ENCODE measurements at regions of chr1 and their contacts with region 1.

Region 1: DNA sequence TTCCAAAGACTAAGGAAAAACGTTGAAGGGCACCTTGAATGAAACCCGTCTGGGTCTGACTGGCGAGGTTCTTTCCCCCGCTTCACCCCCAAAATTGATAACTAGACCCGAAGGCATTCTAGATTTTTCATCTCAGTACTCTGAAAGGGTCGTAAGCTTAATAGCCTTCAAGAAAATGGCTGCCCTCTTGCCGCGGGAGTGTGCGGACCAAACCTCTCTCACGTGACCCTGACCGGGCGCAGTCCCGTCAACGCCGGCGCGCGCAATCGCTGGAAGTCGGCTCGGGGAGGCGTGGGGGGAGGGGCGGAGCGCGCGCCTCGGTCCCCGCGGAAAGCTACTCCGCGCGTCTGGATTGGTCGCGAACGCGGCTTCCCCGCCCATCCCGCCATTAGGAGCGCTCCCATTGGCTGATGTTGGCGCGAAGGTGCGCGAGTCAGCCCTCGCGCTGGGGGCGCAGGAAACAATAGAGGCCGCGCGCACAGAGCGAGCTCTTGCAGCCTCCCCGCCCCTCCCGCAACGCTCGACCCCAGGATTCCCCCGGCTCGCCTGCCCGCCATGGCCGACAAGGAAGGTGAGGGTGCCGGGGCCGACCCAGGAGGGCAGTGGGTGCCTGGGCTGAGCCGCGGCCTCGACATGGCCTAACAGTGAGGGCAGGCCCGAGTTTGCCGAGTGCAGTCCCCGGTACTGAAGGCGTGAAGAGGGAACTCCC is at the start of gene RBBP4:
- DNase-seq: peak; percentile 95 to 99 (median 98)
- ATAC-seq: peak; percentile 91
- H3K4me3 ChIP-seq: peak within 1 kb of the TSS; percentile 87
- H3K4me3 Mint-ChIP-seq: peak within 1 kb of the TSS; percentile 91 to 99 (median 94)
- H3K27ac ChIP-seq: peak within 1 kb of the TSS; percentile 86
- H3K27ac Mint-ChIP-seq: peak within 1 kb of the TSS; percentile 97 to 100 (median 99)
- H3K4me1 ChIP-seq: peaks cover 42 to 45% of the 10 kb centered on the region in 2 donors
- H3K4me1 Mint-ChIP-seq: peaks cover 28 to 73% (median 60%) of the 10 kb centered on the region in 7 donors
- H3K27me3 ChIP-seq: no peaks in the 10 kb centered on the region
- H3K27me3 Mint-ChIP-seq: peaks cover 0 to 2% (median 0%) of the 10 kb centered on the region in 5 donors
- total RNA-seq, gene RBBP4: 130 to 280 (median 162) TPM

Region 2: DNA sequence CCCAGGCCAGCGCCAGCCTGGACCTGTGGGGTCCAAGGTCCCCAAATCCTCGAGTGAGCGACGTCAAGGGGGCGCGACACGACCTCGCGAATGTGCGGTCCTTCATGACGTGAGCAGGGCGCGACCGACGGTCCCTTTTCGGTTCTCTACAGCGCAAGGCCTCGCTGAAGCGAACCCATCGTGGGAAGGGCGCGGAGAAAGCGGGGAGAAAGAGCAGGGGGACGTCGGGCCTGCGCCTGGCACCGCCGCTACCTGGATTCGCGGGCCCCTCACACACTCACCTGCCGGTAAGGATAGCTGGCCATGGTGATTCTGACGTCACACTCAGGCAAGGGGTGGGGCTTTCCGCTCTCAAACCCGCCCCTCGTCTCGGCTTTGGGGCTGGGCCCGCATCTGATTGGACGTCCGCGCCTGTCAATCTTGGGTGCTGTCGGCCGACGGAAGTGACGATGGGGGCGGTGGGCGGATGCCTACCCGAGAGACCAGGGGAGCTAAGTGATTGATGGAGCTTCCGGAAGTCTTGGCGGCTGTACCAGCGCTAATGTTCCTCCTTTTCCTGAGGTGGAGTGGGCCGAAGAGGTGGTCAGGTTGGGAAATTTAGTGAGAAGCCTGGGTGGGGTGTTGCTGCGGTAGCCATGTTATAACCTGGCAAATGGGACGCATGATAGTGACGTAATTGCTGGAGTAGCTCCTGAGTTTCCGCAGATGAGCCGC is 1006.2 kb before region 1 on chr1 and contains the start of gene PEF1:
- CTCF ChIA-PET with region 1: no interaction called
- POLR2A ChIA-PET with region 1: no interaction called
- intact Hi-C with region 1: loop called (anchors 2 kb)
- DNase-seq: peak; percentile 97 to 100 (median 99)
- ATAC-seq: peak; percentile 94
- H3K4me3 ChIP-seq: peak within 1 kb of the TSS; percentile 91
- H3K4me3 Mint-ChIP-seq: peak within 1 kb of the TSS; percentile 92 to 100 (median 98)
- H3K27ac ChIP-seq: peak within 1 kb of the TSS; percentile 98
- H3K27ac Mint-ChIP-seq: peak within 1 kb of the TSS; percentile 98 to 100 (median 99)
- H3K4me1 ChIP-seq: peaks cover 27 to 30% of the 10 kb centered on the region in 2 donors
- H3K4me1 Mint-ChIP-seq: peaks cover 18 to 47% (median 40%) of the 10 kb centered on the region in 7 donors
- H3K27me3 ChIP-seq: no peaks in the 10 kb centered on the region
- H3K27me3 Mint-ChIP-seq: no peaks in the 10 kb centered on the region
- total RNA-seq, gene PEF1: 37.7 to 49.8 (median 40.8) TPM

Region 3: GRCh38 chr1:32247983-32248889 is 402.7 kb before region 1 on chr1:
- CTCF ChIA-PET with region 1: no interaction called
- POLR2A ChIA-PET with region 1: no interaction called
- intact Hi-C with region 1: loop called in 1 of 2 experiments (anchors 2 kb)
- DNase-seq: peak; percentile 43 to 84 (median 56)
- ATAC-seq: peak; percentile 45
- H3K4me3 ChIP-seq: peak overlapping the region; percentile 52
- H3K4me3 Mint-ChIP-seq: peak overlapping the region; percentile 66 to 100 (median 98)
- H3K27ac ChIP-seq: peak overlapping the region; percentile 91
- H3K27ac Mint-ChIP-seq: peak overlapping the region; percentile 92 to 100 (median 99)
- H3K4me1 ChIP-seq: peaks cover 37 to 51% of the 10 kb centered on the region in 2 donors
- H3K4me1 Mint-ChIP-seq: peaks cover 32 to 60% (median 52%) of the 10 kb centered on the region in 7 donors
- H3K27me3 ChIP-seq: no peaks in the 10 kb centered on the region
- H3K27me3 Mint-ChIP-seq: peaks cover 0 to 2% (median 0%) of the 10 kb centered on the region in 5 donors

Region 4: DNA sequence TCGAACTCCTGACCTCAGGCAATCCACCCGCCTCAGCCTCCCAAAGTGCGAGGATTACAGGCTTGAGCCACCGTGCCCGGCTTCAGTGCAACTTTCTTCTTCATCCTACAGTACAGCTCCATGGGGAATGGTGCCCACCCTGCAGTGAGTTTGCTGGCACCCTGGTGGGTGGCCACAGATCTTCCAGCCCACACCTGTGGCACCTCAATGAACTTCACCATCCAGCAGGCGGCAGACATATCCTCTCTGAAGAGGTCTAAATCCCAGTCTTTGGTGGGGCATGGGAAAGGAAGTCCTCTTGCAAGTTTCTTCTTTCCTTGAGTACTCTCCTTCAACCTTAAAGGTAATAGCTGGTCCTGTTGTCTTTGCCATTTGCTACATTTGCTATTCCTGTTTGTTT is 129.7 kb before region 1 on chr1:
- CTCF ChIA-PET with region 1: no interaction called
- POLR2A ChIA-PET with region 1: no interaction called
- intact Hi-C with region 1: loop called (anchors 1 kb)
- DNase-seq: no peak
- ATAC-seq: no peak
- H3K4me3 ChIP-seq: no peak overlapping the region
- H3K4me3 Mint-ChIP-seq: peak overlapping the region in 9 of 10 donors; percentile 48 to 83 (median 66)
- H3K27ac ChIP-seq: no peak overlapping the region
- H3K27ac Mint-ChIP-seq: no peak overlapping the region
- H3K4me1 ChIP-seq: no peaks in the 10 kb centered on the region
- H3K4me1 Mint-ChIP-seq: peaks cover 0 to 14% (median 5%) of the 10 kb centered on the region in 7 donors
- H3K27me3 ChIP-seq: no peaks in the 10 kb centered on the region
- H3K27me3 Mint-ChIP-seq: peaks cover 5 to 19% (median 8%) of the 10 kb centered on the region in 5 donors

Region 5: DNA sequence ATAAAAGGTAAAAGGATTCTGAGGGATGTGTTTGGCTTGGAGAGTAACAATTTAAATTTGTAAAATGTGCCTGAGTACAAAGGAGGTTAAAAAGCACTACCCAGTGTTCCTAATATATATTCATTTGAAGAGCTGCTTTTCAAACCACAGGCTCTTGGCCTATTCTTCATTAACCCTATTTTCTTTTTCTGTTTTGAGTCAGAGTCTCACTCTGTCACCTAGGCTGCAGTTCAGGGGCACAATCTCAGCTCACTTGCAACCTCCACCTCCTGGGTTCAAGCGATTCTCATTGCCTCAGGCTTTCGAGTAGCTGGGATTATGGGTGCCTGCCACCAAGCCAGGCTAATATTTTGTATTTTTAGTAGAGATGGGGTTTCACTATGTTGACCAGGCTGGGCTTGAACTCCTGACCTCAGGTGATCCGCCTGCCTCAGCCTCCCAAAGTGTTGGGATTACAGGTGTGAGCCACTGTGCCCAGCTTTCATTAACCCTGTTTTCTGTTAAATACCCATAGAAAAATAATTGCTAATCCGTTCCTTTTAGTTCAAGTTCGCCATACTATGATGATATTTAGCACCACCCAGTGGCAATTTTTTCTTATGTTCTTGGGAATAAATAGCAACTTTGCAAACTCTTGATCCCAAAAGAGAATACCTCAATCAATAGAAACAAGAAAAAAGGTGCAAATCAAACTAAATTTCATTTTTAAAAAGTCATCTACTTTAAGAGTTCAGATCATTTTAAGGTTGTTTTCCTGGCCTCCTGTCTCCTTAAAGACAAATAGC is 31.0 kb before region 1 on chr1:
- CTCF ChIA-PET with region 1: no interaction called
- POLR2A ChIA-PET with region 1: no interaction called
- intact Hi-C with region 1: no loop called
- DNase-seq: no peak
- ATAC-seq: no peak
- H3K4me3 ChIP-seq: no peak overlapping the region
- H3K4me3 Mint-ChIP-seq: no peak overlapping the region
- H3K27ac ChIP-seq: no peak overlapping the region
- H3K27ac Mint-ChIP-seq: peak overlapping the region in 1 of 9 donors; percentile 19
- H3K4me1 ChIP-seq: peaks cover 0 to 13% of the 10 kb centered on the region in 2 donors
- H3K4me1 Mint-ChIP-seq: peaks cover 13 to 19% (median 18%) of the 10 kb centered on the region in 7 donors
- H3K27me3 ChIP-seq: no peaks in the 10 kb centered on the region
- H3K27me3 Mint-ChIP-seq: no peaks in the 10 kb centered on the region

Region 6: DNA sequence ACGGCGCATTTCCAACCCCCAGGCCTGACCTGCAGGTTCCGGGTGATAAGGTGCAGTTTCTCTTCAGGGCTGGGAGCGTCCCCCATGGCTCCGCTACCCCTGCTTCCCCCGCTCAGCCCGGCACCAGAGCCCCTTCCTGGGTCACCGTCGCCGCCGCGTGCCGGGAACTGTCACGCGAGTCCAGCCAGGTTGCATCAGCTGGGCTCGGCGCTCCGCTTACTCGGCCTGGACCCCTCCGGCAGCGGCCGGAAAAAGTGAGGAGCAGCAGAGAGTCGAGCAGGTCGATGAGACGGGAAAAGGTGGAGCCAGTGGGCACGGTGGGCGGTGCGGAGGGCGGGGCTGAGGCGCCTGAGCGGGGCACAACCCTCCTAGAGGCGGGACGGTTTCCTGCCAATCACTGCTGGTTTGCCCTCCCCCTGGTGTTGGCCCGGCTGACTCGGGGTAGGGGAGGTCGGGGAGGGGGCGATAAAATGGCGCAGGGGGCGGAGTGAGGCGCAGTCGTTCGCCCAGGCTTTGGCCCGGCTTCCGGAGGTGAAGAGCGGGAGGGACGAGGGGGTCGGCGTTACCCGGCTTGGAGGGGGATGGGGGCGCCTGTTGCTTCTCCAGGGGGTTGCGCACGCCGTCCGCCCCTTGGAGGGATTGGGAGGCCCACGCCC is 166.4 kb after region 1 on chr1 and contains the starts of genes S100PBP and YARS1:
- CTCF ChIA-PET with region 1: no interaction called
- POLR2A ChIA-PET with region 1: interaction called, 4 read pairs
- intact Hi-C with region 1: loop called (anchors 1 kb)
- DNase-seq: peak; percentile 98 to 100 (median 99)
- ATAC-seq: peak; percentile 99
- H3K4me3 ChIP-seq: peak within 1 kb of the TSS; percentile 86
- H3K4me3 Mint-ChIP-seq: peak within 1 kb of the TSS; percentile 85 to 99 (median 96)
- H3K27ac ChIP-seq: peak within 1 kb of the TSS; percentile 85
- H3K27ac Mint-ChIP-seq: peak within 1 kb of the TSS; percentile 82 to 96 (median 92)
- H3K4me1 ChIP-seq: peaks cover 26 to 36% of the 10 kb centered on the region in 2 donors
- H3K4me1 Mint-ChIP-seq: peaks cover 35 to 72% (median 59%) of the 10 kb centered on the region in 7 donors
- H3K27me3 ChIP-seq: no peaks in the 10 kb centered on the region
- H3K27me3 Mint-ChIP-seq: no peaks in the 10 kb centered on the region
- total RNA-seq, gene S100PBP: 36.3 to 69.0 (median 60.2) TPM
- total RNA-seq, gene YARS1: 70.2 to 175 (median 86.8) TPM

Region 7: DNA sequence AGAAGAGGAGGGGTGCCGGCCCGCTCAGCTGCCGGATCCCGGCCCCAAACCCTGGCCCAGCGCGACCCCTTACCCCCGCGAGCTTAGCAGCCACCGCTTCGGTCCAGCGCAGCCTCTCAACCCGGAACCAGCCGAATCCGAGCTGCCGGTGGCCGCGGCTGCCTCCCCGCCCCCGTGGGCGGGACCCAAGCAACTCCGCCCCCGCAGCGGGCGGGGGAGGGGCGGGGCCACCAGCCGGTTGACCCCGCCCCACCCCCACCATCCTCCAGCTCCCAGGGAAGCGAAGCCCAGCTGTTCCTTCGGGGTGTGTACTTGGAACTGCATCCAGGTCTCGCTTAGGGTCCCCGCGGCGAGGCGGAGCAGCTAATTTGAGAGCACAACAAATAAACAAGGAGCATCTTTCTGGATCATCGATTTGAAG is 531.0 kb after region 1 on chr1 and contains the start of gene TRIM62:
- CTCF ChIA-PET with region 1: no interaction called
- POLR2A ChIA-PET with region 1: interaction called, 3 read pairs
- intact Hi-C with region 1: loop called in 1 of 2 experiments (anchors 2 kb)
- DNase-seq: peak; percentile 57 to 80 (median 73)
- ATAC-seq: peak; percentile 85
- H3K4me3 ChIP-seq: peak within 1 kb of the TSS; percentile 78
- H3K4me3 Mint-ChIP-seq: peak within 1 kb of the TSS; percentile 84 to 95 (median 89)
- H3K27ac ChIP-seq: peak within 1 kb of the TSS; percentile 64
- H3K27ac Mint-ChIP-seq: peak within 1 kb of the TSS; percentile 47 to 89 (median 79)
- H3K4me1 ChIP-seq: peaks cover 8 to 12% of the 10 kb centered on the region in 2 donors
- H3K4me1 Mint-ChIP-seq: peaks cover 22 to 35% (median 31%) of the 10 kb centered on the region in 7 donors
- H3K27me3 ChIP-seq: no peaks in the 10 kb centered on the region
- H3K27me3 Mint-ChIP-seq: peaks cover 0 to 35% (median 7%) of the 10 kb centered on the region in 5 donors
- total RNA-seq, gene TRIM62: 13.2 to 24.2 (median 19.4) TPM